Right ventricle myocardium superior (tissue), 1 donor: ENCODE measurements at regions of chr4 and their contacts with region 1.

Region 1: GRCh38 chr4:112636688-112637551 is at the starts of genes LARP7 and ZGRF1:
- DNase-seq: peak; percentile 99
- ATAC-seq: peak; percentile 97
- total RNA-seq, gene LARP7: 59.2 TPM
- total RNA-seq, gene ZGRF1: 1.7 TPM

Region 2: GRCh38 chr4:112765317-112765975 is 128.5 kb after region 1 on chr4:
- intact Hi-C with region 1: loop called (anchors 2 kb)
- DNase-seq: no peak
- ATAC-seq: peak; percentile 70

Region 3: DNA sequence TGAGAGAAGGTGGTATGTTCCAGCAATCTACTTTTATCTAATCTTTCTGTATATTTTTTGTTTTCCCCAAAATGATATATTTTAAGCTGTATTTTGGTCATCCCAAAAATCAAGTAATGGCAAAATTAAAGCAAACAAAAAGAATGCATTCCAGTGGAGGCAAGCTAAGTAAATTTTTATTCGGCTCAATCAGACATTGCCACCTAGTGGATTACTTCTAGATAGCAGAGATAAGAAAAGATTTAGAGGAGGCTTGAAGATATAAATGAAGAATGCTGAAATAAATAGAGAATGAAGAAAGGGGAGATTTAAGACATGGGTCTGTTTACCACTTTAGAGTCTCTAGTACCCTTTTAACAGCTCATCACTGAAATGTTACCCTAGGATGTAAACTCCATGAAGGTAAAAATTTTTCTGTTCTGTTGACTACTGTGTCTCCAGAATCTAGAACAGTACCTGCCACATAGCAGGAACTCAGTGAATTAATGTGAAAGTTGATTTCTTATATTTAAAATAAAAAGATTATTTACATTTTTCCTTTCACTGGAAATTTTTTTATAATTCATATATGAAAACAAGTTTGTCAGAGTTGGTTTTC is 301.6 kb after region 1 on chr4:
- intact Hi-C with region 1: loop called (anchors 5 kb)
- DNase-seq: no peak
- ATAC-seq: peak; percentile 53